ENCODE measurements at regions of chr7 and their contacts with region 1.

Region 1: DNA sequence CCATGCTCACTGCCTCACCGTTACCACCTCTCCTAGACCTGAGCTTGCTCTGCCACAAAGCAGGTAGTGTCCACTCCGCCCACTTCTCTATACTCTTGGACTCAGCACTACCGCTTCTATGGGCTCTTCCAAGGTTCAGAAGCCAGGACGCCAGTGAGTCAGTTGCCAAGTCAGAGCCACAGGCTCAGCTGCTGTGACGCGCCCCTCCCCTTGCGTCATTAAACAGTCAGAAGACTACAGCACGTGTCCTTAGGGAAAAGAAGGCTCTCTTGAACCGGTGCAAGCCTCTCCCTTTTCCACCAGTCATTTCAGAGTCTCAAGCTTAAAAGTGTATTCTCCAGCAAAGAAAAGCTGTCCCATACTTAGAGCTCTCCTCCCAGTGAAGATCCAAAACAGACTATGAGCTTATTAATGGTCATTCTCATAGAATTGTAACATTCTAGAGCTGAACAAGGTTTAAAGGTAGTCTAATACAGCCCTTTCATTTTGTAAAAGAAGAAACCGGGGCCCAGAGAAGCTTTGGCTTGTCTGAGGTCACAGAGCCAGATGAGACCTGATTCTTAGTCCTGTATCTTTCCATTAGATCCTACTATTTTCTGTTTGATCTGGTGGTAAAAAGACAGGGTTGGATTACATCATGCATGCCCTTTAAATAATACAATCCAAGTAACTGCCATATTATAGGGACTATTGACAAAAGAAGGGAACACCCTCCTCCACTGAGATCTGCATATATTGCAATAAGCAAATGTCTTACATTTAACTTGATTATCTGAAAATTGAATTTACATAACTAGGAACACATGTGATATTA is 40.9 kb upstream of the MET start:
- DNase-seq: peak; percentile 97
- H3K4me3 Mint-ChIP-seq: peak overlapping the region; percentile 62
- H3K27ac Mint-ChIP-seq: peak overlapping the region; percentile 94
- H3K4me1 Mint-ChIP-seq: peaks cover 48% of the 10 kb centered on the region
- H3K27me3 Mint-ChIP-seq: no peaks in the 10 kb centered on the region
- CTCF ChIP-seq: no peak

Region 2: DNA sequence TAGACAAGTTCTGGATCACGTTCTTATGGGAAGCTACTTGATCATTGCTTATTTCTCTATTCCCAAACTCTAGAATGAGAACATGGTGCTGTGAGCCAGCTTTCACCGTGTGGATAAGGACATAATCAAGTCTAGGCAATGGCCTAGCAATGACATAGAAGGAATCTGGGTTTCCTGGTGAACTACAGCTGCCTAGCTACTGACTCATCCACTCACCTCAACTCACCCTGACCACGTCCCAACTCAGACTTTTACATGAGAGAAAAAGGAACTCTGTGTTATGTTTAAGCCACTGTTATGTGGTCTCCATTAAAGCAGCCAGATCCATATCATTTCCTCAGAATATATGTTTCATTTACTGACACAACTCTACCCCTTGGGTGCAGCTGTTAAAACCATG is 22.1 kb after region 1 on chr7:
- CTCF ChIA-PET with region 1: interaction called, 19 read pairs
- POLR2A ChIA-PET with region 1: interaction called, 181 read pairs
- intact Hi-C with region 1: no loop called
- DNase-seq: peak; percentile 83
- H3K4me3 Mint-ChIP-seq: no peak overlapping the region
- H3K27ac Mint-ChIP-seq: peak overlapping the region; percentile 64
- H3K4me1 Mint-ChIP-seq: peaks cover 17% of the 10 kb centered on the region
- H3K27me3 Mint-ChIP-seq: no peaks in the 10 kb centered on the region
- CTCF ChIP-seq: no peak

Region 3: DNA sequence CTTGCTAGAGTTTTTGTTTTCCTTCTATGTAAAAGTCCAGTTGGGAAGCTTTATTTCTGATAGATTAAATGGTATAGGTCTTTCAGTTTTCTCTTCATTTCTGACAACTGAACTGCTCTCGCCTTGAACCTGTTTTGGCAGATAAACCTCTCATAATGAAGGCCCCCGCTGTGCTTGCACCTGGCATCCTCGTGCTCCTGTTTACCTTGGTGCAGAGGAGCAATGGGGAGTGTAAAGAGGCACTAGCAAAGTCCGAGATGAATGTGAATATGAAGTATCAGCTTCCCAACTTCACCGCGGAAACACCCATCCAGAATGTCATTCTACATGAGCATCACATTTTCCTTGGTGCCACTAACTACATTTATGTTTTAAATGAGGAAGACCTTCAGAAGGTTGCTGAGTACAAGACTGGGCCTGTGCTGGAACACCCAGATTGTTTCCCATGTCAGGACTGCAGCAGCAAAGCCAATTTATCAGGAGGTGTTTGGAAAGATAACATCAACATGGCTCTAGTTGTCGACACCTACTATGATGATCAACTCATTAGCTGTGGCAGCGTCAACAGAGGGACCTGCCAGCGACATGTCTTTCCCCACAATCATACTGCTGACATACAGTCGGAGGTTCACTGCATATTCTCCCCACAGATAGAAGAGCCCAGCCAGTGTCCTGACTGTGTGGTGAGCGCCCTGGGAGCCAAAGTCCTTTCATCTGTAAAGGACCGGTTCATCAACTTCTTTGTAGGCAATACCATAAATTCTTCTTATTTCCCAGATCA is 68.0 kb after region 1 on chr7:
- CTCF ChIA-PET with region 1: no interaction called
- POLR2A ChIA-PET with region 1: interaction called, 14 read pairs
- intact Hi-C with region 1: no loop called
- DNase-seq: no peak
- H3K4me3 Mint-ChIP-seq: no peak overlapping the region
- H3K27ac Mint-ChIP-seq: no peak overlapping the region
- H3K4me1 Mint-ChIP-seq: peaks cover 20% of the 10 kb centered on the region
- H3K27me3 Mint-ChIP-seq: no peaks in the 10 kb centered on the region
- CTCF ChIP-seq: no peak

Region 4: DNA sequence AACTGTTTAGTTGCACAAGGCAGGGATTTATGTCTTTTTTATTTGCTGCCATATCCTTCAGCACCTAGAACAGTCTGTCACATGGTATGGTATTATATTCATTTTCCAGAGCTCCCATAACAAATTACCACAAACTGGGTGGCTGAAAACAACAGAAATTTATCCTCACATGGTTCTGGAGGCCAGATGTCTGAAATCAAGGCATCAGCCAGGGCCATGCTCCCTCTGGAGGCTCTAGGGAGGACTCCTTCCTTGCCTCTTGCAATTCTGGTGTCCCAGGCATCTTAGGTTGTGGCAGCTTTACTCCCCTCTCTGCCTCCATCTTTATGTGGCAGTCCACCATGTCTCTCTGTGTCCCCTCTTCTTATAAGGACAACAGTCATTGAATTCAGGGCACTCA is 83.9 kb after region 1 on chr7:
- CTCF ChIA-PET with region 1: interaction called, 4 read pairs
- POLR2A ChIA-PET with region 1: interaction called, 12 read pairs
- intact Hi-C with region 1: no loop called
- DNase-seq: no peak
- H3K4me3 Mint-ChIP-seq: no peak overlapping the region
- H3K27ac Mint-ChIP-seq: peak overlapping the region; percentile 84
- H3K4me1 Mint-ChIP-seq: peaks cover 43% of the 10 kb centered on the region
- H3K27me3 Mint-ChIP-seq: no peaks in the 10 kb centered on the region
- CTCF ChIP-seq: no peak

Measured in MCF 10A (cell line).